HCT116 (cell line): ENCODE measurements at regions of chr11 and their contacts with region 1.

Region 1: GRCh38 chr11:70082829-70083228 is 4.7 kb downstream of the ANO1 start:
- DNase-seq: no peak
- ATAC-seq: no peak
- H3K4me3 ChIP-seq: no peak overlapping the region
- H3K27ac ChIP-seq: no peak overlapping the region
- H3K4me1 ChIP-seq: peaks cover 23 to 36% of the 10 kb centered on the region in 2 experiments
- H3K27me3 ChIP-seq: no peaks in the 10 kb centered on the region
- CTCF ChIP-seq: peak; percentile 45 to 57 (median 55); a peak in 5 of 6 replicates
- POLR2A ChIP-seq: no peak
- RAD21 ChIP-seq: peak; percentile 50

Region 2: DNA sequence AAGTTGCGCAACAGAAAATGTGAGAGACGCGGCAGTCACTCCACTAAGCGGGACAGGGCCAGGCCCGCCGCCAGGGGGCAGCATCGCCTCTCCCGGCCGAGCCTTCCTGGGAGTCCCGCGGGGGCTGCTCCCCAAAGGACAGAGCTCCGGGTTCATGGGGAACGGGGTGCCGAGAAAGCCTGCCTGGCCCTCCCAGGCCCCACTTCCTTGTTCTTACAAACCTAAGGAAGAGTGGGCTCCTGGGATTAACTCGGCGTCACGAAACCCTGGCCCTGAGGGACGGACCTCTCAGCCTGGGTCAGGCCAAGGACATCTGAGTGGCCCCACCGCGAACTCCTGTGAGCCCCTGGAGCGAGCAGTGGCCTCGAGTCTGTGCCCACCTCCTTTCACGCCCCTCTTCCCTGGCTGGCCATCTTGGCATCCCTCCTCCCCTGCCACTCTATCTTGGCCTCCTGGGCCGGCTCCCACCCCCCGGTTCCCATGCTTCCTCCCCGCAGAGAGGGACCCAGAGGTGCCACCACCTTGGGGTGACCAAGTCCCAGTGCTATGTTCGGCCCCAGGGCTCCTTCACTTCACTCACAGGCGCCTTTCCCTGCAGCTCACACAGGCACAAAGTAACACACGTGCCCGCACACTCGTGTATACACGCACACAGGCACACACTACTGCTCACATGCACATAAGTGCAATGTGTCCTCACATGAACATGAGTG is 163.7 kb before region 1 on chr11:
- CTCF ChIA-PET with region 1: interaction called, 9 read pairs
- POLR2A ChIA-PET with region 1: interaction called, 3 read pairs
- RAD21 ChIA-PET with region 1: interaction called, 3 read pairs
- intact Hi-C with region 1: loop called (anchors 5 kb)
- DNase-seq: peak; percentile 43
- ATAC-seq: peak; percentile 72
- H3K4me3 ChIP-seq: 0 out of 4 replicates have a peak overlapping the region, but pooled peaks of 1 of the 2 experiments have one; percentile 8
- H3K27ac ChIP-seq: no peak overlapping the region; the same call in 1 of the 2 replicates
- H3K4me1 ChIP-seq: peaks cover 18 to 39% of the 10 kb centered on the region in 2 experiments
- H3K27me3 ChIP-seq: no peaks in the 10 kb centered on the region
- CTCF ChIP-seq: peak in 2 of 3 experiments; percentile 93 to 94; a peak in 4 of 6 replicates
- POLR2A ChIP-seq: no peak
- RAD21 ChIP-seq: no peak

Region 3: GRCh38 chr11:69949327-69949726 is 133.5 kb before region 1 on chr11:
- CTCF ChIA-PET with region 1: interaction called, 5 read pairs
- POLR2A ChIA-PET with region 1: no interaction called
- RAD21 ChIA-PET with region 1: interaction called in 1 of 2 experiments, 3 read pairs
- intact Hi-C with region 1: loop called (anchors 2 kb)
- DNase-seq: peak; percentile 97
- ATAC-seq: peak; percentile 75
- H3K4me3 ChIP-seq: peak overlapping the region; percentile 13 to 41; a peak in 3 of 4 replicates
- H3K27ac ChIP-seq: peak overlapping the region; percentile 97
- H3K4me1 ChIP-seq: peaks cover 41 to 56% of the 10 kb centered on the region in 2 experiments
- H3K27me3 ChIP-seq: no peaks in the 10 kb centered on the region
- CTCF ChIP-seq: no peak
- POLR2A ChIP-seq: no peak
- RAD21 ChIP-seq: no peak

Region 4: GRCh38 chr11:70099578-70100279 is 16.9 kb after region 1 on chr11:
- CTCF ChIA-PET with region 1: no interaction called
- POLR2A ChIA-PET with region 1: no interaction called
- RAD21 ChIA-PET with region 1: no interaction called
- intact Hi-C with region 1: no loop called
- DNase-seq: no peak
- ATAC-seq: no peak; the same call in 1 of the 2 replicates
- H3K4me3 ChIP-seq: no peak overlapping the region
- H3K27ac ChIP-seq: no peak overlapping the region
- H3K4me1 ChIP-seq: no peaks in the 10 kb centered on the region
- H3K27me3 ChIP-seq: no peaks in the 10 kb centered on the region
- CTCF ChIP-seq: no peak
- POLR2A ChIP-seq: no peak
- RAD21 ChIP-seq: no peak